ENCODE measurements at regions of chr19 and their contacts with region 1.

Region 1: DNA sequence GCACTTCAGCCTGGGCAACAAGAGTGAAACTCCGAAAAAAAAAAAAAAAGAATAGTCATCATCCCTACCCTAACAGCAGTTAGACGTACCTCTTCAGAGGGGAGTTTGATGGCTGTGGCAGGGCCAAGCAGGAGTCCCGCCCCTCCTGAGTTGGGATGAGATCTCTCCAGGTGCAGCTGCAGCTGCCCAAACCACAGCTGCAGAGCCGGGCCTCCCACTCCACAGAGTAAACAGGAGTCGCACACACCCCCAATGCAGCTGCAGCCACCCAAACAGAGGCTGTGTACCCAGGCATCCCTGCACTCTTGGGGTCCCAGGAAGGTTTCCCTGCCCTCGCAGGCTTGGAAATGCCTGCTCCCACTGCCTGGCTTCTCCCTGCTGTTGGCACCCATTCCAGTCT is 17.4 kb upstream of the MLLT1 start:
- DNase-seq: no peak

Region 2: GRCh38 chr19:6048808-6049405 is 248.3 kb before region 1 on chr19:
- intact Hi-C with region 1: loop called (anchors 5 kb)
- DNase-seq: peak; percentile 91

Region 3: DNA sequence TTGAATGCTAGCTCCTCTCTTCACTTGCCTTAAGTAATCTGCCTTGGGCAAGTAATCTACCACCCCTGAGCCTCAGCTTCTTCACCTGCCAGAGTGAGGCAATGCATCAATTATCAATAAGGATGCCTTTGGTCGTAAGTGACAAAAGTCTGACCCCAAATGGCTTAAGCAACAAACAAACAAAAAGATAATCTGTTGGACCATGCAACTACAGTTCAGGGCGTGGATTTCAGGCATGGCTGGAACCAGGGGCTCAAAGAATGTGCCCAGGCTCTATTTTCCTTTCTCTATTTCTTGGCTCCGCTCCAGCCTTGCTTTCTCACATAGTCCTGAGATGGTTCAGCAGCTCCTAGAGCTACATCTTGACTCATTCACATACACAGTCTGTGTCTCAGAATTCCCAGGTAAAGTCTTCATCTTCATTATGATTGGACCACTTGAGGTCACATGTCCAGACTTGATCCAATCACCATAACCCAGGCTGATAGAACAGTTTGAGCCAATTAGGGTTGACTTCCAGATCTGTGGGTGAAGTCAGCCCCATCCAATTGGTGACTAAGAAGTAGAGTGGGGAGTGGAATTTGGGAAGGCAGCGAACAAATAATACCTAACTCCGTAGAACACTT is 132.2 kb before region 1 on chr19:
- intact Hi-C with region 1: loop called (anchors 5 kb)
- DNase-seq: no peak

Region 4: GRCh38 chr19:6218491-6219162 is 78.6 kb before region 1 on chr19:
- intact Hi-C with region 1: loop called (anchors 1 kb)
- DNase-seq: peak; percentile 94

Region 5: DNA sequence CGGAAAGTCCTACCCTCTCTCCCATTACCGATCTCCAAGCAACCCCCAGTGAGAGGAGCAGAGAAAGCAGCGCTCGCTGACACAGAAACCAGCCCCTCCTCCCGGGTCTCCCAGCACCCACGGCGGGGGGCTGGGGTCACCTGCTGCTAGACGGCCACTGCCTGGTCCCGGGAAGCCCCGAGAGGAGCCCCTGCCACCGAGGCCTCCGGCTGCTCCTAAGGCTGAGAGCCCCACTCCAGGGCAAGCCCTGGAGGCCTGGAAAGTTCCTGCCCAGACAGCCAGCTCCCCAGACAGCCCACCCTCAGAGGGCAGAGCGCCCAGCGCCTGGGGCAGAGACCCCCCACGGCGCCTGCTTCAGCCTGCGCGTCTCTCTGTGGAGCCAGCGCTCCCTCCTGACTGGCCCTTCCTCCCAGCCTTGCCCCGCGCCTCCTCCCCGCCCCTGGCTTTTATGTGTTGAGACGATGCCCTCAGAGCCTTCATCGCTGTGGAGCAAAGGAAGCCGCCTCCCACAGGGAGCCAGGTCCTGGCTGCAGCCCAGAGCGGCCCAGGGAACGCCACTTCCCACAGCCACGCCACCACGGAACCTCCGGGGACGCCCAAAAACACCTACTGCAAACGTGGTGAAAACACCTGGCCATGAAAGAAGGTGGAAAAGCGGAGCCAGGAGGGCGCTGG is 68.5 kb before region 1 on chr19:
- intact Hi-C with region 1: no loop called
- DNase-seq: no peak